ENCODE measurements at regions of chr1 and their contacts with region 1.

Region 1: GRCh38 chr1:230772457-230773395 is 25.5 kb downstream of the CAPN9 start:
- DNase-seq: peak; percentile 41 to 42
- ATAC-seq: peak; percentile 96

Region 2: GRCh38 chr1:230681599-230681998 is 91.1 kb before region 1 on chr1:
- intact Hi-C with region 1: loop called in 1 of 2 experiments (anchors 10 kb)
- DNase-seq: no peak
- ATAC-seq: no peak